Gastrocnemius medialis (tissue), 4 donors: ENCODE measurements at regions of chr5 and their contacts with region 1.

Region 1: GRCh38 chr5:78377056-78377717 is 16.8 kb downstream of the SCAMP1 start:
- DNase-seq: peak; percentile 20 to 27
- ATAC-seq: peak; percentile 84 to 89
- H3K4me3 ChIP-seq: peak overlapping the region in 2 of 4 donors; percentile 1 to 18
- H3K27ac ChIP-seq: peak overlapping the region; percentile 55 to 75 (median 62)
- H3K4me1 ChIP-seq: peaks cover 26 to 43% of the 10 kb centered on the region in 2 donors
- H3K27me3 ChIP-seq: no peaks in the 10 kb centered on the region
- CTCF ChIP-seq: no peak
- POLR2A ChIP-seq: no peak

Region 2: GRCh38 chr5:78569448-78569847 is 192.3 kb after region 1 on chr5:
- in situ Hi-C with region 1: no loop called
- intact Hi-C with region 1: loop called (anchors 1 kb)
- DNase-seq: peak; percentile 81 to 87
- ATAC-seq: peak; percentile 90 to 97
- H3K4me3 ChIP-seq: no peak overlapping the region
- H3K27ac ChIP-seq: peak overlapping the region in 2 of 4 donors; percentile 12 to 66
- H3K4me1 ChIP-seq: peaks cover 42 to 50% of the 10 kb centered on the region in 2 donors
- H3K27me3 ChIP-seq: no peaks in the 10 kb centered on the region
- CTCF ChIP-seq: no peak
- POLR2A ChIP-seq: no peak